ENCODE measurements at regions of chr5 and their contacts with region 1.

Region 1: DNA sequence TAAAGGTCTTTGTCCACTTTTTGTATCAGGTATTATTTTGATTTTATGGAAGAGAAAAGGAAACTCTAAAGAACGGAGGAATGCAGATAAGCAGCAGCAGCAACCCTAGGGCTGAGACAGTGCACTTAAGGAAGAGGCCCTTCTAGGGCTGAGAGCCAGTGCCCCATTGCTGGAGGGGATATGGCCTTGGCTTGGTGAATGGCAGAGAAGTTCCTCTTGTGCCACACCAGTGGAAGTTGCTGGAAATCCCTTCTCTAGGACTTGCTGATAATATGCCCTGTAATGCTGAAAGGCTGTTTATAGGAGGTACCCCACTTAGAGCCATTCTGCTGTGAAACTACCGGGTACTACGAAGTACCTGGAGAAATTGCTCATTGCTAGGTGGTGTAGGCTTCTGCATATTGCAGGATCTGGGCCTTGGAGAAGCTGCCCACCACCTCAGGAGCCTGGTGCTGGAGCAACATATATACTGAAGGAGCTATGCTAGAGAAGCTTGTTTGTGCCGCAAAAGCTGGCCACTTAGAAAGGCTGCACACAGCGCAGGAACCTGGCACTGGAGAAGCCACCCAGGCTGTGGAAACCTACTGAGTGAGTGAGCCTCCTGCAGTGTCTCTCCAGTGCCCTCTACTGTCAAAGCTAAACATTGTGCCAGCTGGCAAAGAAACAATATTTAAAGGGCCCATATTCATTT is 9.6 kb upstream of the UBTD2 start:
- DNase-seq: peak; percentile 58
- H3K4me3 ChIP-seq: no peak overlapping the region
- H3K27ac ChIP-seq: no peak overlapping the region
- H3K4me1 ChIP-seq: no peaks in the 10 kb centered on the region
- H3K27me3 ChIP-seq: no peaks in the 10 kb centered on the region
- CTCF ChIP-seq: peak; percentile 91 to 94

Region 2: GRCh38 chr5:171907725-171908343 is 385.4 kb before region 1 on chr5:
- CTCF ChIA-PET with region 1: no interaction called
- dilution Hi-C with region 1: no loop called
- in situ Hi-C with region 1: no loop called
- intact Hi-C with region 1: loop called (anchors 1 kb)
- DNase-seq: peak; percentile 48
- H3K4me3 ChIP-seq: no peak overlapping the region
- H3K27ac ChIP-seq: no peak overlapping the region
- H3K4me1 ChIP-seq: no peaks in the 10 kb centered on the region
- H3K27me3 ChIP-seq: no peaks in the 10 kb centered on the region
- CTCF ChIP-seq: peak; percentile 68 to 83

Region 3: DNA sequence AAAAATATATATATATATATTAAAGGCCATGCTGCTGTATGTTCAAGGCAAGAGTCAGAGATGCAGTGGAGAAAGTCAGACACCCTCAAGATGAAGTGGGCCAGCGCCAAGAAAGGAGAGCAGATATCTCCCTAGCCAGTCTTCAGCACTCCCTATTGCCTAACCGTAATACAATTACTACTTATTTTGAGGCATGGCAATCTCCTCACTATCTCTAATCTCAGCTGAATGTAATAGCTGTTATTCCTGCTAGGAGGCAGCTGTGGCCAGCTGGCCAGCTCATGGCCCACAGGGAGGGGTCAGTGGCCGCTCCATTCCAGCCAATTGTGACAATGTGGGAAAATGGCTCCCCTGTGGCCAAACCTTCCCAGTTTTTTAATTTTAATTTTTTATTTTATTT is 199.2 kb before region 1 on chr5:
- CTCF ChIA-PET with region 1: no interaction called
- dilution Hi-C with region 1: no loop called
- in situ Hi-C with region 1: no loop called
- intact Hi-C with region 1: no loop called
- DNase-seq: no peak
- H3K4me3 ChIP-seq: no peak overlapping the region
- H3K27ac ChIP-seq: no peak overlapping the region
- H3K4me1 ChIP-seq: no peaks in the 10 kb centered on the region
- H3K27me3 ChIP-seq: no peaks in the 10 kb centered on the region
- CTCF ChIP-seq: no peak

Region 4: GRCh38 chr5:172106511-172107356 is 186.5 kb before region 1 on chr5:
- CTCF ChIA-PET with region 1: interaction called, 3 read pairs
- dilution Hi-C with region 1: no loop called
- in situ Hi-C with region 1: loop called in 1 of 2 experiments (anchors 25 kb)
- intact Hi-C with region 1: loop called (anchors 1 kb)
- DNase-seq: no peak
- H3K4me3 ChIP-seq: no peak overlapping the region
- H3K27ac ChIP-seq: peak overlapping the region; percentile 29
- H3K4me1 ChIP-seq: peaks cover 75% of the 10 kb centered on the region
- H3K27me3 ChIP-seq: no peaks in the 10 kb centered on the region
- CTCF ChIP-seq: peak; percentile 63 to 96

Region 5: GRCh38 chr5:172496671-172497371 is 203.6 kb after region 1 on chr5:
- CTCF ChIA-PET with region 1: no interaction called
- dilution Hi-C with region 1: no loop called
- in situ Hi-C with region 1: no loop called
- intact Hi-C with region 1: no loop called
- DNase-seq: no peak
- H3K4me3 ChIP-seq: no peak overlapping the region
- H3K27ac ChIP-seq: no peak overlapping the region
- H3K4me1 ChIP-seq: no peaks in the 10 kb centered on the region
- H3K27me3 ChIP-seq: no peaks in the 10 kb centered on the region
- CTCF ChIP-seq: no peak

Region 6: GRCh38 chr5:172697123-172698121 is 404.2 kb after region 1 on chr5:
- CTCF ChIA-PET with region 1: no interaction called
- dilution Hi-C with region 1: no loop called
- in situ Hi-C with region 1: no loop called
- intact Hi-C with region 1: loop called (anchors 2 kb)
- DNase-seq: peak; percentile 70
- H3K4me3 ChIP-seq: peak overlapping the region; percentile 42 to 65 (median 62)
- H3K27ac ChIP-seq: no peak overlapping the region
- H3K4me1 ChIP-seq: peaks cover 5% of the 10 kb centered on the region
- H3K27me3 ChIP-seq: peaks cover 2% of the 10 kb centered on the region
- CTCF ChIP-seq: peak; percentile 80 to 88

Measured in mammary epithelial cell (primary cell).